CD8-positive, alpha-beta memory T cell (primary cell): ENCODE measurements at regions of chr12 and their contacts with region 1.

Region 1: DNA sequence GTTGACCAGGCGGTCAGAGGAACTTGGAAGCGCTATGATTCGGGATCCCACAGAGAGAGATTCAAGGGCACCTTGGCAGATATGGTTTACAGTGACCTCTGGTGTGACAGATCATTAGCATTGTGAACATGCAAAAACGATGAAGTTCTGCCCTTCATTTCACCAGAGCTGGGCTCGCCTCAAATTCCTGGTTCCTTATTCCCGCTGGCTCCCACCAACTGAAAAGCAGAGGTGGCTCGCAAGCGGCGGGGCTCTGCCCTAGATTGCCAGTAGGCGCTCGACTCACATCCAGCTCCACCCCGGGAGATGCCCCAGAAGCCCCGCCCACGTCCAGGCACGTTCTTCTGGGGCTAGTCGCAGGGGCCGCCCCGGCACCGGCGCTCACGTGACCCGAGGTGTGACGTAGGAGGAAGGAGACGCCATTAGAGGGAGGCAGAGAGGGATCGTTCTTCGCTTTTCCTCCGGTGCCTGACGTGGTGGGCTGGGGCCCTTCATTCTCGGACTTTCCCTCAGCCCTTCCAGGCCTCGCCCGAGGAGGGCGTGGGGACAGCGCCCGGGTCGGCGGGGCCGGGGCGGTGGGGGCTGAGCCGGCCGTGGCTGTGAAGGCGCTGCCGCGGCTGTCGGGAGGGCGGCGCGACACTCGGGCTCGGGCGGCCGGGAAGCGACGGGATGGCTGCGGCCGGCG is at the start of gene RAB21:
- DNase-seq: peak; percentile 96 to 99 (median 99)
- H3K4me3 ChIP-seq: peak within 1 kb of the TSS; percentile 87
- H3K4me3 Mint-ChIP-seq: peak within 1 kb of the TSS; percentile 93 to 99 (median 94)
- H3K27ac ChIP-seq: peak within 1 kb of the TSS; percentile 91
- H3K27ac Mint-ChIP-seq: peak within 1 kb of the TSS; percentile 96 to 99 (median 99)
- H3K4me1 ChIP-seq: peaks cover 22% of the 10 kb centered on the region
- H3K4me1 Mint-ChIP-seq: peaks cover 38 to 51% (median 48%) of the 10 kb centered on the region in 3 donors
- H3K27me3 ChIP-seq: no peaks in the 10 kb centered on the region
- H3K27me3 Mint-ChIP-seq: peaks cover 12 to 16% of the 10 kb centered on the region in 2 donors
- total RNA-seq, gene RAB21: 100 to 106 TPM

Region 2: DNA sequence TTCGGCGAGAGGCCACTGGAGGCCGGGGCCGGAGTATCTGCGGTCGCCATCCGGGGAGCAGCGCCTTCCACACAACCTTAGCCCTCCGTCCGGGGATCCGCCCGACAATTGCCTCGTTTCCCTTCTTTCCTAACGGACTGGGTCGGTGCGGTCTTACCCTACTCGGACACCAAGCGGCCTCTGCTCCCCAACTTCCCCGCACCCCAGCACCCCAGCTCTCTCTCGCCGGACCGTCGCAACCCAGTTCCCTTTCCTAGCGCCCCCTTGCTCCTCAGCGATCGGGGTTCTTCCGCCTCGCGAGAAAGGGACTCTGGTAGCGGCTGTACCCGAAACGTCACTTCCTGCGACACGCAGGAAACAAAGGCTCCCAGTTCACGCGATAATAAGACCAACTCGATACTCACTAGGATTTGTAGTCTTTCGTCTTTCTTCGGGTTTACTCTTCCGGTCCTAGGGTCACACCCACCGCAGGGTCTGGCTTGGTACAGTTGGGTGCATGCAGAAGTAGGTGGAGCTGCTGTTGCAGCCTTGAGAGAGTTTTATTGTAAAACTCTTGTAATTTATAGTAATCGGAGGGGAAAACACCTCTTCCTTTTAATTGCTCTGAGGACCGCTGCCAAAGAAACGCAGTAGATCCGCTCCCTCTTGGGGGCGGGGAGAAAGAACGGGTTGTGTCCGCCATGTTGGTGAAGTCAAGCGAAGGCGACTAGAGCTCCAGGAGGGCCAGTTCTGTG is 90.9 kb before region 1 on chr12 and contains the start of gene ZFC3H1:
- CTCF ChIA-PET with region 1: interaction called, 5 read pairs
- POLR2A ChIA-PET with region 1: interaction called, 28 read pairs
- DNase-seq: peak; percentile 85 to 96 (median 95)
- H3K4me3 ChIP-seq: peak within 1 kb of the TSS; percentile 90
- H3K4me3 Mint-ChIP-seq: peak within 1 kb of the TSS; percentile 94 to 100 (median 99)
- H3K27ac ChIP-seq: peak within 1 kb of the TSS; percentile 99
- H3K27ac Mint-ChIP-seq: peak within 1 kb of the TSS; percentile 97 to 100 (median 100)
- H3K4me1 ChIP-seq: peaks cover 33% of the 10 kb centered on the region
- H3K4me1 Mint-ChIP-seq: peaks cover 49 to 63% (median 59%) of the 10 kb centered on the region in 3 donors
- H3K27me3 ChIP-seq: no peaks in the 10 kb centered on the region
- H3K27me3 Mint-ChIP-seq: peaks cover 0 to 3% of the 10 kb centered on the region in 2 donors
- total RNA-seq, gene ZFC3H1: 37.5 to 42.6 TPM

Region 3: DNA sequence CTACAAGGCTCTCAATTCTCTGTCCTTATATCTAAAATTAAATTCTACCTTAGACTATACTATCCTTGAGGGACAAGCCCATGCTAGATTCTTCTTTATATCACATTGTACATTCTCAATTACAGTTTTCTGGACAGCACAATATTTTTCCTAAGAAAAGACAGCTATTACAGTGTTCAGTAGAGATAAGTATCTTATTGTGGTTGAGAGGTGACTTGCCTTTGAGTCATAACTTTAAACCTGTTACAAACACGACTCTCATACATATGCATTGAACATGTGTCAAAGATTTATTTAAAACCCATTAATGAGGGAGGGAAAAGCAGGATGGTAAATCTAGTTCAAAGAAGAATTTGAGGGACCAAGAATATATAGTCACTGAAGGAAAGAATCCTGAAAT is 245.2 kb after region 1 on chr12:
- CTCF ChIA-PET with region 1: no interaction called
- POLR2A ChIA-PET with region 1: no interaction called
- DNase-seq: no peak
- H3K4me3 ChIP-seq: no peak overlapping the region
- H3K4me3 Mint-ChIP-seq: no peak overlapping the region
- H3K27ac ChIP-seq: no peak overlapping the region
- H3K27ac Mint-ChIP-seq: no peak overlapping the region
- H3K4me1 ChIP-seq: no peaks in the 10 kb centered on the region
- H3K4me1 Mint-ChIP-seq: no peaks in the 10 kb centered on the region
- H3K27me3 ChIP-seq: no peaks in the 10 kb centered on the region
- H3K27me3 Mint-ChIP-seq: peaks cover 7 to 12% of the 10 kb centered on the region in 2 donors